Activated CD4-positive, alpha-beta memory T cell treated with anti-CD3 and anti-CD28 coated beads for 36 hours (primary cell): ENCODE measurements at regions of chr2 and their contacts with region 1.

Region 1: GRCh38 chr2:157480182-157480961 is 36.5 kb upstream of the CYTIP start:
- DNase-seq: peak; percentile 82
- H3K4me3 Mint-ChIP-seq: peak overlapping the region; percentile 54
- H3K27ac Mint-ChIP-seq: peak overlapping the region; percentile 95
- H3K4me1 Mint-ChIP-seq: peaks cover 68% of the 10 kb centered on the region
- H3K27me3 Mint-ChIP-seq: no peaks in the 10 kb centered on the region

Region 2: GRCh38 chr2:157312866-157313486 is 167.4 kb before region 1 on chr2:
- CTCF ChIA-PET with region 1: interaction called, 147 read pairs
- POLR2A ChIA-PET with region 1: no interaction called
- intact Hi-C with region 1: loop called (anchors 1 kb)
- DNase-seq: no peak
- H3K4me3 Mint-ChIP-seq: no peak overlapping the region
- H3K27ac Mint-ChIP-seq: no peak overlapping the region
- H3K4me1 Mint-ChIP-seq: peaks cover 34% of the 10 kb centered on the region
- H3K27me3 Mint-ChIP-seq: peaks cover 2% of the 10 kb centered on the region

Region 3: DNA sequence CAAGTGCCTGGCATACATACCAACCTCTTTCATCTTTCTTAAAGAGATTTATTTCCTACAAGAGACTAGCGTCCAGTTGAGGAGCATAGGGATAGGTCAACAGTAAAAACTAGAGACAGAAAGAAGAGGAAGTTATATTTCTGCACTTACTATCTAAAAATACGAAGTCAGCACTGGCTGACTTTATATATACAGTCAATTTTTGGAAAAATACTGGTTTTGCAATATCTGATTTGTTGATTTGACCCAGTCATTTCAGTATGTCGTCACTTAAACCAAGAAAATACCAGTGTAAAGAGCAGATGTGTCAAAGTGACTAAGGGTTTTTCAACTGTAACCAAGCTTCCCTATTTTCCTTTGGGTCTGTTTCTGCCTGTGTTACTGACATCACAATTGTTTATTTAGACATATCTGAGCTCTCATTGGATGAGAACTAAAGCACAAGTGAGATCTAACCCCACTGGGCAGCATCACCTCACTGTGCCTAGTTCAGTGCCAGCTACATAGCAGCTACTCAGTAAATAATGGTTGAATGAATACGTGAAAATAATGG is 59.5 kb before region 1 on chr2:
- CTCF ChIA-PET with region 1: interaction called, 5 read pairs
- POLR2A ChIA-PET with region 1: interaction called, 10 read pairs
- intact Hi-C with region 1: no loop called
- DNase-seq: peak; percentile 61
- H3K4me3 Mint-ChIP-seq: peak overlapping the region; percentile 38
- H3K27ac Mint-ChIP-seq: peak overlapping the region; percentile 97
- H3K4me1 Mint-ChIP-seq: peaks cover 74% of the 10 kb centered on the region
- H3K27me3 Mint-ChIP-seq: no peaks in the 10 kb centered on the region

Region 4: DNA sequence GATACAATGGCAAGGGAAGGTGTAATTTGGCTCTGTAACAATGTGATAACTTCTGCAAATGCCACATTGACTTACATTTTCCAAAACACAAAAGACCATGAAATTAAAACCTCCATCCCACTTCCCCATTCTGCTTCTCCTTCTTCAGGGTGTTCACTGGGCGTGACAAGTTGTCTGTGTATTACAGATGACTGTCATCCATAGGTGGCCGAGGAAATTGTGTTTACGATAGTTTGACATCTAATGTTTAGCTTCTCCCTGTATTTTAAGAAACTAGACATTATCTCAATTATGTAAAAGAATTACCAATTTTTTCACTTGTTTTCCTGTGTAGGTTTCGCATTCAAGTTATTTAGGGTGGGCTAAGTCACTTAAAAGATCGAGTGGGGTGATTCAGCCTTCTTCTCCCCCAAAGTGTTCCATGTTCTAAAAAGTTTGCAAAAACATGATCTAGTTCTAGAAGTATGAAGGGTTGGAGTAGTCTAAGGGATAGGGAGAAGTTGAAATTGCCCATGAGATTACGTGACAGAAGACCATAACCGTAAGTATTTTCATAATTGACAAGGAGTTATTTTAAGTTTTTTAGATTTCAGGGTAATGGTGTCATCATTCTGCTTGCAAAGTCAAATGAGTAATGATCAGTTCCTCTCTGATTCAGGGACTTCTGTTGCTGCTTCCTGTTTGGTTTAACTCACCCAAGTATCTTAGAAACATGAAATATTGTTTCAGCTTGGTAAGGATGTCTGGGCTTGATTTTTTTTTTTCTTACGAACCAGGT is 11.3 kb before region 1 on chr2:
- CTCF ChIA-PET with region 1: interaction called, 5 read pairs
- POLR2A ChIA-PET with region 1: interaction called, 33 read pairs
- intact Hi-C with region 1: loop called (anchors 1 kb)
- DNase-seq: no peak
- H3K4me3 Mint-ChIP-seq: peak overlapping the region; percentile 69
- H3K27ac Mint-ChIP-seq: peak overlapping the region; percentile 99
- H3K4me1 Mint-ChIP-seq: peaks cover 91% of the 10 kb centered on the region
- H3K27me3 Mint-ChIP-seq: no peaks in the 10 kb centered on the region

Region 5: GRCh38 chr2:157504623-157505022 is 24.3 kb after region 1 on chr2:
- CTCF ChIA-PET with region 1: no interaction called
- POLR2A ChIA-PET with region 1: no interaction called
- intact Hi-C with region 1: no loop called
- DNase-seq: no peak
- H3K4me3 Mint-ChIP-seq: no peak overlapping the region
- H3K27ac Mint-ChIP-seq: no peak overlapping the region
- H3K4me1 Mint-ChIP-seq: no peaks in the 10 kb centered on the region
- H3K27me3 Mint-ChIP-seq: peaks cover 10% of the 10 kb centered on the region

Region 6: DNA sequence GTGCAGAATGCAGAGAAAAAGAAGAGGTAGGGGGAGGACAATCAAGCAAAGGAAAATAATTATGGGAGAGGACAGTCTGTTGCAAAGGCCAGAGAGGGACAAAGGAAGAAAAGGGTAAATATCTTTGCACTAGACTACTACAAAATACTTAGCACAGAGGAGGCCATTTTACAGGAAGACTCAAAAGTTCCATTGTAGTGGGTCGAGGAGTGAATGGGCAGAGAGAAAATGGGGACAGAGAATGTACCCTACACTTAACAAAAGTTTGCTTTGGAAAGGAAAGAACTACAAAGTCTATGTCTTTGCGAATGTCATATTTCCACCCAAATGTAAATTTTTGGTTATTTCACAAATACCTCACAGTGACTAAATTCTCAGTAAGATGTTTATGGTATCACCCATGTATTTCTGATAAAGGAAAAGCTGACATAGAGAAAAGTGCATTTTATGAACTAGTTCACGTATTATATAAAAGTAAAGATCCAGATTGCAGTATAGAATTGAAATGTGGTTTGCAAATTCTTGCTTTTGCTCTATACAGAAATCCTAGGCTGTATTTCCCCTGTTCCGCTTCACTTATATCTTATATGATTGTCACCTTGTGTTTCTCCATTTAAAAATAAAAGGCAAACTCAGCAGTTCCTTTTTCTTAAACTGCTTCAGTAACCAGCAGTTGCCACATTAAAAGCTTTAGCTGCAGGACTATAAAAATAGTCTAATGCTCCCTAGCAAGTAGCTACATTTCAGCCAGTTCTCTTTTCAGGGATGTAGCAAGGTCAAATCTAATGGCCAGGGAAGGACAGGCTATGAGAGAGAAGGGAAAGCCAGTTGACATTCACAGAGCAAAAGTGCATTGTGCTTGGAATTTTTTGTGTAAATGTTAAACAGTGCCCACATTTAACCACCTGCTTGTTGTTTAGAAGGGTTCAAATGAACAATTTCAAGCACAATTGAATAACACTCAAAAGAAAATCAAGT is 43.2 kb after region 1 on chr2:
- CTCF ChIA-PET with region 1: no interaction called
- POLR2A ChIA-PET with region 1: no interaction called
- intact Hi-C with region 1: no loop called
- DNase-seq: no peak
- H3K4me3 Mint-ChIP-seq: no peak overlapping the region
- H3K27ac Mint-ChIP-seq: no peak overlapping the region
- H3K4me1 Mint-ChIP-seq: no peaks in the 10 kb centered on the region
- H3K27me3 Mint-ChIP-seq: no peaks in the 10 kb centered on the region

Region 7: GRCh38 chr2:157868993-157869392 is 388.6 kb after region 1 on chr2:
- CTCF ChIA-PET with region 1: no interaction called
- POLR2A ChIA-PET with region 1: no interaction called
- intact Hi-C with region 1: loop called (anchors 2 kb)
- DNase-seq: peak; percentile 35
- H3K4me3 Mint-ChIP-seq: no peak overlapping the region
- H3K27ac Mint-ChIP-seq: peak overlapping the region; percentile 6
- H3K4me1 Mint-ChIP-seq: peaks cover 89% of the 10 kb centered on the region
- H3K27me3 Mint-ChIP-seq: no peaks in the 10 kb centered on the region